PC-3 (cell line): ENCODE measurements at regions of chr10 and their contacts with region 1.

Region 1: DNA sequence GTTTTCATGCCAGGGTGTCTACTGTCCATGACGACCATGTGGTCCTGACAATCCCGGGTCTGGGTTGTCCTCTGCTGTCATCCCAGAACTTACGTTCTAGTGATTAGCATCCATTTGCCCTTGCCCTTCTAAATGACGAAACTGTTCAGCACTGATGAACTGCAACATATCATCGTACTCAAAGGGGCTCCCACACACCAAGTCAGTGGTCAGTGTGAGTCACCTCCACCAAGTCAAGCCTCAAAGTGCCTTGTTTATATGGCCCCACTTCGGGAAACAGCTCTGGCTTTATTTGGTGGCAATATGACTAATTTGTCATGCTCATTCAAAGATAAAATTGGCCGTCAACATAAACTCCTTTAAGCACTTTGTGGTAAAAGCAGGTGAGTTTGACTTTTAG is 110.7 kb downstream of the FRMD4A start:
- DNase-seq: no peak
- ATAC-seq: no peak
- H3K4me3 ChIP-seq: no peak overlapping the region
- H3K27ac ChIP-seq: no peak overlapping the region
- H3K4me1 ChIP-seq: no peaks in the 10 kb centered on the region
- H3K27me3 ChIP-seq: peaks cover 10% of the 10 kb centered on the region; the same call in 1 of the 2 replicates
- CTCF ChIP-seq: no peak

Region 2: DNA sequence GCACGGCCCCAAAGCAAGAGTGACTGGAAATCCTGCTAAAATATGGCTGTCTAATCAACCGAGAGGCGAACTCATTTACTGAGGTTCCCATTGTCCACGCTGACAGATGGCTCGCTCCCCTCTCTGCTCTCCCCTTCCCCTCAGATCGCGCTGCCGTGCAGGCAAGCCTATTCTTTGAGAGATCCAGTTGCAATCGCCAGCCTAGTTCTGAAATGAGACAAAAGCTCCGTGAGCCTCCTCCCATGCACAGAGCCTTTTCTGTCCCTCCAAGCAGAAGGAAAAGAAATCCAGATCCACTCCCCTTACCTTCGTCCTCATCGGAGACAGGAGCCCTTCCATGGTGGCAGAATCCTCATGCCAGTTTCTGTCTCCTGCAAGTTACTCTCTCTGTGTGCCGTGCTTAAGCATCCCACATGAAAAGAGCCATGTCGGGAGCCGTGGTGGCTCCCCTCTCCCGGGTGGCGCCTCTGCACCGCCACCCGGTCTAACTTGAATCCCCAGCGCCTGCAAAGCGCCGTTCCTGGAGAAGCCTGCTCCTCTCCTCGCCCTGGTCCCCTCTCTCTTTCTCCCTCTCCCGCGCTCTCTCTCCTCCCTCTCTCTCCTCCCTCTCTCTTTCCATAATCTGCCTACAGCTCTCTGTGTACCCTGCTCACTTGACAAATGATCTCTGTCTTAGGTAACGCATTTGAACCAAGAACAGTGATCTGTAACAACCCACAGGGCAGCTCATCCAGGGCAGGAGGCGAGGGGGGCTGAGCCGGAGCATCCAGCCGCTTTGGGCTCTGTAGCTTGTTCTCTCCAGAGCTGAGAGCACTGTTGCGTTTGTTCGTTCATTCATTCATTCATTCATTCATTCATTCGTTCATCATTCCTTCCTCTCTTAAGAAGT is 46.1 kb before region 1 on chr10:
- CTCF ChIA-PET with region 1: interaction called, 11 read pairs
- POLR2A ChIA-PET with region 1: no interaction called
- intact Hi-C with region 1: no loop called
- DNase-seq: peak; percentile 7
- ATAC-seq: peak; percentile 57
- H3K4me3 ChIP-seq: peak overlapping the region; percentile 59
- H3K27ac ChIP-seq: no peak overlapping the region
- H3K4me1 ChIP-seq: no peaks in the 10 kb centered on the region
- H3K27me3 ChIP-seq: peaks cover 34% of the 10 kb centered on the region
- CTCF ChIP-seq: no peak

Region 3: GRCh38 chr10:14340051-14340744 is 120.2 kb after region 1 on chr10:
- CTCF ChIA-PET with region 1: no interaction called
- POLR2A ChIA-PET with region 1: no interaction called
- intact Hi-C with region 1: no loop called
- DNase-seq: no peak
- ATAC-seq: no peak
- H3K4me3 ChIP-seq: no peak overlapping the region
- H3K27ac ChIP-seq: no peak overlapping the region
- H3K4me1 ChIP-seq: no peaks in the 10 kb centered on the region
- H3K27me3 ChIP-seq: peaks cover 24% of the 10 kb centered on the region
- CTCF ChIP-seq: no peak